PC-9 (cell line): ENCODE measurements at regions of chr10 and their contacts with region 1.

Region 1: GRCh38 chr10:123132576-123133477 is 2.9 kb upstream of the HMX3 start:
- DNase-seq: peak in 1 of 2 experiments; percentile 65
- H3K4me3 ChIP-seq: no peak overlapping the region
- H3K27ac ChIP-seq: no peak overlapping the region
- H3K4me1 ChIP-seq: peaks cover 14% of the 10 kb centered on the region
- H3K27me3 ChIP-seq: no peaks in the 10 kb centered on the region
- CTCF ChIP-seq: peak; percentile 60

Region 2: GRCh38 chr10:122894261-122894944 is 238.4 kb before region 1 on chr10:
- CTCF ChIA-PET with region 1: no interaction called
- POLR2A ChIA-PET with region 1: no interaction called
- intact Hi-C with region 1: no loop called
- DNase-seq: no peak
- H3K4me3 ChIP-seq: no peak overlapping the region
- H3K27ac ChIP-seq: no peak overlapping the region
- H3K4me1 ChIP-seq: no peaks in the 10 kb centered on the region
- H3K27me3 ChIP-seq: no peaks in the 10 kb centered on the region
- CTCF ChIP-seq: no peak

Region 3: DNA sequence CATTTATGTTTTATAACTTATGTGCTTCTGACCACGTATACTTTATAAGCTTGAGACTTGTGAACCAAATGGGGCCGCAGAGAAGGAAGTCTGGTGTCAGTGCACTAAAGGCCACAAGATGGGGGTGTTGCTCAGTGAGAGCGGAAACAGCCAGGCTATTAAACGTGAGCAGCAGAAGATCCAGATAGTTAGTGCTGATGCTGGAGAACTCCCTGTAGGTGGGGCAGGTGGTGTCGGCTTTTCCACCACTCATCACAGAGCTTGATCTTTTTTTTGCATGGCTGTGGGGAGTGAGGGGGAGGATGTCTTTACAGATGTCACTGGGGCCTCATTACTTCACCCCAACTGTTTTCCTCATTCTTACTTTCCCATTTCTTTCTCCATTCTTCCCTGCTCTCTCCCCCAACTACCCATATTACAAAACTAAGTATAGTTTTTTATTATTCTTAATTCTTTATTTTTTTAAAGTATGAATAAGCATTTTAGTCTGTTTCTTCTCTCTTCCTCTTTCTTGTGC is 89.4 kb before region 1 on chr10:
- CTCF ChIA-PET with region 1: no interaction called
- POLR2A ChIA-PET with region 1: no interaction called
- intact Hi-C with region 1: loop called (anchors 5 kb)
- DNase-seq: peak in 1 of 2 experiments; percentile 18
- H3K4me3 ChIP-seq: no peak overlapping the region
- H3K27ac ChIP-seq: no peak overlapping the region
- H3K4me1 ChIP-seq: no peaks in the 10 kb centered on the region
- H3K27me3 ChIP-seq: no peaks in the 10 kb centered on the region
- CTCF ChIP-seq: peak; percentile 84

Region 4: GRCh38 chr10:123154092-123154921 is 21.5 kb after region 1 on chr10 and contains the start of gene BUB3:
- CTCF ChIA-PET with region 1: no interaction called
- POLR2A ChIA-PET with region 1: no interaction called
- intact Hi-C with region 1: no loop called
- DNase-seq: peak; percentile 90 to 95
- H3K4me3 ChIP-seq: peak within 1 kb of the TSS; percentile 92
- H3K27ac ChIP-seq: peak within 1 kb of the TSS; percentile 57; the same call in 1 of the 2 replicates
- H3K4me1 ChIP-seq: peaks cover 20% of the 10 kb centered on the region
- H3K27me3 ChIP-seq: no peaks in the 10 kb centered on the region
- CTCF ChIP-seq: no peak
- total RNA-seq, gene BUB3: 96.5 and 112 TPM in 2 replicates

Region 5: DNA sequence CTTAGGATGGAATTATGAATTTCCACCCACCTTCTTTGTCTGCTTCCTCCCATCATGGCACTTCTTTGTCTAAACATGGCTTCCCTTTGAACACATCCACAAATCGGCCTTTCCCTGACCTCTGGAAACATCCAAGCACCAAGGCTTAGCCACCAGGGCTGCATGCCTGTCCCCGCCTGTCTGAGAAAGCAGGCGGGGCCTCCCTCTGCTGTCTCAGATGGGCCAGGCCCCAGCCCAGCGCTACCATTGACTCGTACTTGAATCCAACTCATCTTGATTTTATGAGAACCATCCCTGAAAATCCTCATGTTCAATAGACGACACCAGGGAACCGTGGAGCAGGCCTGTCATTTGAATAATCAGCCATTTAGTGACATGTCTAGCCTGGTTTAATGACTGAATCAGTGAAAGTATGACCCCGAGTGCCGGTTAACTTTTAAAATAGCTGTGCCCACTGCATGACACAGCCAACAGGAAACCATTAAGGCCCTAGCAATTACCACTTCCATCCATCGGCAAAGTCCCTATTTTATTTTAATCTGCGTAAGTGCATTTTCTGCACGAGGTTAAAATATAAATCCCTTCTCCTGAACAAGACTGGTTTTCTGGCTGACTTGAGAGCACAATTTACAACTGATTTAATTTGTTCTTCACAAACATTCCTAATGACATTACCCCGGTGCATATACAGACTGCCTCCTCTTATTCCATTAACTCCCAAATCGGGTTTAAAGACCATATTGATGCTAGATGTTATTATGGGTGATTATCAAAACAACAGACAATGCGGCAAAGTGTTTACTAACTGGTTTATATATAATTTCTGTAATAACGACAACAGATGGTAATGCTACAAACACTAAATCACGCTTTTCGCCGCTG is 216.1 kb after region 1 on chr10:
- CTCF ChIA-PET with region 1: no interaction called
- POLR2A ChIA-PET with region 1: no interaction called
- intact Hi-C with region 1: no loop called
- DNase-seq: no peak
- H3K4me3 ChIP-seq: no peak overlapping the region
- H3K27ac ChIP-seq: no peak overlapping the region
- H3K4me1 ChIP-seq: no peaks in the 10 kb centered on the region
- H3K27me3 ChIP-seq: peaks cover 4% of the 10 kb centered on the region
- CTCF ChIP-seq: no peak

Region 6: GRCh38 chr10:123380497-123381085 is 247.8 kb after region 1 on chr10:
- CTCF ChIA-PET with region 1: no interaction called
- POLR2A ChIA-PET with region 1: no interaction called
- intact Hi-C with region 1: loop called (anchors 2 kb)
- DNase-seq: no peak
- H3K4me3 ChIP-seq: no peak overlapping the region
- H3K27ac ChIP-seq: no peak overlapping the region
- H3K4me1 ChIP-seq: peaks cover 12% of the 10 kb centered on the region; the same call in 1 of the 2 replicates
- H3K27me3 ChIP-seq: no peaks in the 10 kb centered on the region
- CTCF ChIP-seq: peak; percentile 46; the same call in 1 of the 2 replicates